Endothelial cell of umbilical vein (primary cell): ENCODE measurements at regions of chr6 and their contacts with region 1.

Region 1: DNA sequence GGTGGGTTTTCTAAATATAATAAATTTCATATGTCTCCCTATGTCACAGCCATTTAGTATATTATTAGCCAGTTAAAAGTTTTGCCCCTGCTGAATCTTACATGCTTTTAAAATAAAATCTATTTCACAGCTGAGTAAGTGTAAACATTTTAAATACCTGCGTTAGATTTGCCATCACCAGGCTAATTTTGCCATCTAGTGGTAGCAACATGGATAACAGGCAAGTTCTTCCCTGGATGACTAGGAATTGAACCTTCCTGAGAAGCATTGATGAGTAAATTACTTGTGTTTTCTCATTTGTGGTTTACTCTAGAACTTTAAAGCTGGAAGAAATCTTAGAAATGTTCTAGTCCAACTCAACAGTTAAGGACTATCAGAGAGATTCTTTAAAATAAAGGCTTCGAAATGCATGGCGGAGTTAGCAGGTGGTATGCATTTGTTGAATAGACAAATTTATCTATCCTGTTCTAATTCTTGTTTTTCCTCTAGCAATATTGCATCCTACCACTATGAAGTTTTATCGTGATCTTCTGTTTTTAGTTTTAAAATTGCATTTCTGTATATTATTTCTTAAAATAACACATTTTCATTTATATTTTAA is 2.6 kb downstream of the PRSS35 start:
- DNase-seq: peak; percentile 75
- H3K4me3 ChIP-seq: no peak overlapping the region
- H3K27ac ChIP-seq: no peak overlapping the region
- H3K4me1 ChIP-seq: peaks cover 9% of the 10 kb centered on the region
- H3K27me3 ChIP-seq: peaks cover 0 to 1% of the 10 kb centered on the region in 2 experiments
- CTCF ChIP-seq: peak; percentile 57 to 61
- POLR2A ChIP-seq: no peak

Region 2: DNA sequence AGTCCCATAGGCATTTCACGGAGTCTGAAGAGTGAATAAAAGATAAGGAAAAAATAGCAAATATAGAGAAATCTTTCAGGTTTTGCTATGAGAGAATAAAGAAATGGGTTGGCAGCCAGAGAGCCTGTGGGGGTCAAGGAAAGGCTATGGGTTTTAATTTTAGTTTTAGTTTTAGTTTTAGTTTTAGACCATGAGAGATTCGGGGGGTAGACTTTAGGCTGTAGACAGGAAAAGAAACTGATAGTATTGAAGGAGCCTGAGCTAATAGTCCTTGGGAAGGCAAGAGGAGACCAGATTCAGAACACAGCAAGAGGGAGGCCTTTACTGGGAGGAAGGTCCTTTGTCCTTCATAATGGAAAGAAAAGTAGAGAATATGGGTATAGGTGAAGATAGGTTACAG is 428.2 kb before region 1 on chr6:
- CTCF ChIA-PET with region 1: no interaction called
- POLR2A ChIA-PET with region 1: no interaction called
- dilution Hi-C with region 1: loop called (anchors 25 kb)
- intact Hi-C with region 1: no loop called
- DNase-seq: no peak
- H3K4me3 ChIP-seq: no peak overlapping the region
- H3K27ac ChIP-seq: no peak overlapping the region
- H3K4me1 ChIP-seq: no peaks in the 10 kb centered on the region
- H3K27me3 ChIP-seq: no peaks in the 10 kb centered on the region
- CTCF ChIP-seq: no peak
- POLR2A ChIP-seq: no peak

Region 3: GRCh38 chr6:83221889-83222479 is 293.0 kb before region 1 on chr6:
- CTCF ChIA-PET with region 1: interaction called, 319 read pairs
- POLR2A ChIA-PET with region 1: no interaction called
- dilution Hi-C with region 1: loop called (anchors 25 kb)
- intact Hi-C with region 1: loop called (anchors 1 kb)
- DNase-seq: peak; percentile 46
- H3K4me3 ChIP-seq: no peak overlapping the region
- H3K27ac ChIP-seq: no peak overlapping the region
- H3K4me1 ChIP-seq: peaks cover 9% of the 10 kb centered on the region
- H3K27me3 ChIP-seq: no peaks in the 10 kb centered on the region
- CTCF ChIP-seq: peak in 1 of 2 donors; percentile 29
- POLR2A ChIP-seq: no peak

Region 4: GRCh38 chr6:83403191-83403590 is 111.8 kb before region 1 on chr6:
- CTCF ChIA-PET with region 1: no interaction called
- POLR2A ChIA-PET with region 1: no interaction called
- dilution Hi-C with region 1: no loop called
- intact Hi-C with region 1: no loop called
- DNase-seq: no peak
- H3K4me3 ChIP-seq: no peak overlapping the region
- H3K27ac ChIP-seq: no peak overlapping the region
- H3K4me1 ChIP-seq: peaks cover 2% of the 10 kb centered on the region
- H3K27me3 ChIP-seq: no peaks in the 10 kb centered on the region
- CTCF ChIP-seq: no peak
- POLR2A ChIP-seq: no peak

Region 5: GRCh38 chr6:83430611-83431563 is 84.1 kb before region 1 on chr6 and contains the start of gene ME1:
- CTCF ChIA-PET with region 1: interaction called, 4 read pairs
- POLR2A ChIA-PET with region 1: no interaction called
- dilution Hi-C with region 1: no loop called
- intact Hi-C with region 1: loop called (anchors 5 kb)
- DNase-seq: peak; percentile 77
- H3K4me3 ChIP-seq: peak within 1 kb of the TSS; percentile 60 to 90 (median 73)
- H3K27ac ChIP-seq: peak within 1 kb of the TSS; percentile 84
- H3K4me1 ChIP-seq: peaks cover 7% of the 10 kb centered on the region
- H3K27me3 ChIP-seq: no peaks in the 10 kb centered on the region
- CTCF ChIP-seq: no peak
- POLR2A ChIP-seq: no peak
- total RNA-seq, gene ME1: 27.0 and 29.3 TPM in 2 replicates